ENCODE measurements at regions of chr6 and their contacts with region 1.

Region 1: DNA sequence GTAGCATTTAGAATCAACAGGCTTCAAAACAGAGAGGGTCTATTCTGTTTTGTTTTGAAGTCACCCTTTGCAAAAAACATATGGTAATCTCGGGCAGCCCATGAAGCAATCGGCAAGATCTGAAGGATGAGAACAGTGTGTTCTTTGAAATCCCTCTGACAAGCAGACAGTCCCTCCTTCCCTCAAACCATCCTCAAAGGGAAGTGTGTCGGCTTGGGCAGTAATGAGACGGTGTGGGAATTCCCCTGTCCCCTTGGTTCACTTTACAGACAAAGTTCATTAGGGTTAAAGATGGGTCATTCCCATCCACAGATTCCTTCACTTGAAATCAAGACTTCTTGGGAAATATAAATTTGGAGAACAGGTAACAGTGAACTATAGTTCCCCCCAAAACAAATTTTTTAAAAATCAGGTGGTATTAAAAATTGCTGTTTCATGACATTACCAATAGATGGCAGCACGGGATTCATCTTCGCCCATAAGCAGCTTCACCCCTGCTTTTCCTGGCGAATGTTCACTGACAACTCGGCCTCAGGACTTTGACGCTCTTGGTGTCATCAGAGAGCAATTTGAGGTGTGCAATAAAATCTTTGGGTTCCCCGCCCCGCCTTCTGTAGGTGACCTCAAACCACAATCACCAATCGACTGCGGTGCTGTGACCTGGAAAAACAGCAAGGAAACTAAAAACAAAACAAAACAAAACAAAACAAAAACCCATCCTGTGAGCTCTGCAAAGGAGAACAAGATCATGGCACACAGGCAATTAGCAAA is 159.3 kb upstream of the TNFAIP3 start:
- DNase-seq: peak; percentile 46 to 72
- H3K4me3 ChIP-seq: peak overlapping the region in 1 of 2 donors; percentile 18
- H3K27ac ChIP-seq: peak overlapping the region in 1 of 2 donors; percentile 0
- H3K4me1 ChIP-seq: no peaks in the 10 kb centered on the region
- H3K27me3 ChIP-seq: no peaks in the 10 kb centered on the region
- CTCF ChIP-seq: peak; percentile 69 to 82 (median 74)
- POLR2A ChIP-seq: no peak

Region 2: DNA sequence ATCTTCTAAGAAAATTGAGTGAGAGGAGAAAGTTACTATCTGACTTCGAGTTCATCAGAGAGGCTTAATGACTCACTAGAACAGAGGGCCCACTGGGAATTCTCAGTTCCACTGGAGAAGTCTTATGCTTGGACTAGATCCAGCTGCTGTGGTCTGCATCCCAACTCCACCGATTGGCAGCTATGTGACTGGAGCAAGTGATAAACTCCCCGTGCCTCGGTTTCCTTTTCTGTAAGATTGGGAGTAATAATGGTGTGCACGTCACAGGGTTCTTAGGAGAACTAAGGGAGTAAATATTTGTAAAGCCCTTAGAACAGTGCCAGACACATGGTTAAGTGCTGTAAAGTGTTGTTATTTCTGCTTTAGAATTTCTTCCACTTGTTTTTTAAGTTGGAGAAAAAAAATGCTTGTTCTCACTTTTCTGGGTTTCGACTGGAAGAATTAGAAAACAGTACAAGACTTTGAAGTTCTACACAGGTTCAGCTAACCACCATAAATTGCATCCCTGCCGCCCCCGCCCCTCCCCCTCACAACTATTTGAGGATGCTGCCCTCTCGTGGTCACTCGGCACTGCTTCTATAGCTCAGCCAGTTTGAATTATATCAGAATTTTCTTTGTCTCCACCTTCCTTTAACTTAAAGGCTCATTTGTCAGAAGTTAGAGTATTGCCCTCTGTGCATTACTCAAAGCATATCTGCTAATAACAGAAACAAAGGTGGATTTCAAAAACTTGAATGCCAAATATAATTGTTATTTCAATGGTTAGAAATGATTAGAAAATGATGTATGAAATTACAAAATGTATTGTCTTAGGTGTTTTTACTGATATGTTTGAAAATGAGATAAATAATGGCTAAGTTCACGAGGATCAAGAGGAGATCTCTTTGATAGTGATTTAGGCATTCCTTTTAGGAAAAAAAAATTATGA is 393.6 kb before region 1 on chr6:
- intact Hi-C with region 1: no loop called
- DNase-seq: peak; percentile 59 to 76
- H3K4me3 ChIP-seq: no peak overlapping the region
- H3K27ac ChIP-seq: no peak overlapping the region
- H3K4me1 ChIP-seq: no peaks in the 10 kb centered on the region
- H3K27me3 ChIP-seq: no peaks in the 10 kb centered on the region
- CTCF ChIP-seq: peak; percentile 61 to 82 (median 74)
- POLR2A ChIP-seq: no peak

Region 3: DNA sequence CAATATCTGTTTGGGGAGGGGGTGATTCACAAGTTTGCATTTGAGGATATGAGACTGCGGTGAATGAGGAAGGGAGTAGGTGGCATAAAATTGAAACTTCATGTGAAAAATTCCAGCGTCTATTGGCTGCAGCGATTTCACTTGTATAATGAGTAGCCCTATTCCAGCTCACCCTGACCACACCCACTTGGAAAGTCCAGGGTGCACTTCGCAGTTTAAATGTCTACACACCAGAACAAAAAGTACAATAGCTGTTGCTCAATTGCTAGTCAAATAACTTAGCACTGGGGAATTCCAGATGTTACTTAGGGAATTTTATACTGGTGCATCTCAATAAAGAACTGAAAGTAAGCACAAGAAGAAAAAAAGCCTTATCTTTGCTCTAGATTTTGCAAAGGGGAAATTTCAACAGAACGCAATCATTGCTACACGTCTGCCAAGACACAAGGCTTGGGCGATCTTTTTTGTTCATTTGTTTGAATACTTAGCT is 165.5 kb after region 1 on chr6:
- intact Hi-C with region 1: loop called (anchors 10 kb)
- DNase-seq: peak; percentile 74 to 85
- H3K4me3 ChIP-seq: peak overlapping the region in 1 of 2 donors; percentile 24
- H3K27ac ChIP-seq: peak overlapping the region; percentile 52 to 54
- H3K4me1 ChIP-seq: peaks cover 7 to 8% of the 10 kb centered on the region in 2 donors
- H3K27me3 ChIP-seq: no peaks in the 10 kb centered on the region
- CTCF ChIP-seq: no peak
- POLR2A ChIP-seq: no peak

Region 4: GRCh38 chr6:137944793-137945498 is 237.2 kb after region 1 on chr6:
- intact Hi-C with region 1: loop called (anchors 5 kb)
- DNase-seq: peak in 1 of 2 donors; percentile 21
- H3K4me3 ChIP-seq: no peak overlapping the region
- H3K27ac ChIP-seq: no peak overlapping the region
- H3K4me1 ChIP-seq: no peaks in the 10 kb centered on the region
- H3K27me3 ChIP-seq: no peaks in the 10 kb centered on the region
- CTCF ChIP-seq: peak; percentile 70 to 84 (median 76)
- POLR2A ChIP-seq: no peak

Measured in uterus (tissue), 4 donors.